ENCODE measurements at regions of chr13 and their contacts with region 1.

Region 1: DNA sequence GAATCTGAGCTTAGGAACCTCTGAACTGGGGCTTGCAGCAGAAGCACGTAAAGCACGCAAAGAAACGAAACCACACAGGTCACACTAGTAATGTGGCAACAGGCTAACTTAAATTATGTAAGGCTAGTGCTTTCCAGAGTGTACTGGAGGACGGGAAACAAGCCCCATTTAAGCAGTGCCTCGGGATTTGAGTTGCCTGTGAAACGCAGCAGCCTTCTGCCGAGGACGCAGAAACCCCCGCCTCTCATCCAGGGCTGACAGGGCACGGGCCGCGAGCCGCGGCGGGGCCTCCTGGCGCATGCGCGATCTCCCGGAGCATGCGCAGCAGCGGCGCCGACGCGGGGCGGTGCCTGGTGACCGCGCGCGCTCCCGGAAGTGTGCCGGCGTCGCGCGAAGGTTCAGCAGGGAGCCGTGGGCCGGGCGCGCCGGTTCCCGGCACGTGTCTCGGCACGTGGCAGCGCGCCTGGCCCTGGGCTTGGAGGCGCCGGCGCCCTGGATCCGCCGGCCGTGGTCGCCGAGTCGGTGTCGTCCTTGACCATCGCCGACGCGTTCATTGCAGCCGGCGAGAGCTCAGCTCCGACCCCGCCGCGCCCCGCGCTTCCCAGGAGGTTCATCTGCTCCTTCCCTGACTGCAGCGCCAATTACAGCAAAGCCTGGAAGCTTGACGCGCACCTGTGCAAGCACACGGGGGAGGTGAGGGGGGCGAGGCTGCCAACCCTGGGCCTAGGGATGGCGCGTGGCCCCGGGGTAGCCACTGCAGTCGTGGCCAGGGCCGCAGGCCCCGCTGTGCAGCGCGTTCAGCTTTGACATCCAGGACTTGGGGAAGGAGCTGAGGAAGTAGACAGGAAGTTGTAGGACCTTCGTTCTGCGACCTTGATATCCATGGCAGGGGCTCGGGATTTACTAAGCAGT is at the start of gene GTF3A:
- DNase-seq: peak; percentile 95
- total RNA-seq, gene GTF3A: 83.2 to 99.9 TPM

Region 2: GRCh38 chr13:26377038-26377437 is 1047.5 kb before region 1 on chr13:
- intact Hi-C with region 1: loop called in 1 of 2 experiments (anchors 10 kb)
- DNase-seq: no peak

Region 3: GRCh38 chr13:27374650-27375049 is 49.9 kb before region 1 on chr13:
- intact Hi-C with region 1: loop called in 1 of 2 experiments (anchors 10 kb)
- DNase-seq: peak; percentile 87